ENCODE measurements at regions of chr10 and their contacts with region 1.

Region 1: GRCh38 chr10:119750391-119751230 is 24.8 kb downstream of the INPP5F start:
- DNase-seq: peak; percentile 82
- H3K4me3 Mint-ChIP-seq: no peak overlapping the region
- H3K27ac Mint-ChIP-seq: no peak overlapping the region
- H3K4me1 Mint-ChIP-seq: peaks cover 11% of the 10 kb centered on the region
- H3K27me3 Mint-ChIP-seq: no peaks in the 10 kb centered on the region

Region 2: DNA sequence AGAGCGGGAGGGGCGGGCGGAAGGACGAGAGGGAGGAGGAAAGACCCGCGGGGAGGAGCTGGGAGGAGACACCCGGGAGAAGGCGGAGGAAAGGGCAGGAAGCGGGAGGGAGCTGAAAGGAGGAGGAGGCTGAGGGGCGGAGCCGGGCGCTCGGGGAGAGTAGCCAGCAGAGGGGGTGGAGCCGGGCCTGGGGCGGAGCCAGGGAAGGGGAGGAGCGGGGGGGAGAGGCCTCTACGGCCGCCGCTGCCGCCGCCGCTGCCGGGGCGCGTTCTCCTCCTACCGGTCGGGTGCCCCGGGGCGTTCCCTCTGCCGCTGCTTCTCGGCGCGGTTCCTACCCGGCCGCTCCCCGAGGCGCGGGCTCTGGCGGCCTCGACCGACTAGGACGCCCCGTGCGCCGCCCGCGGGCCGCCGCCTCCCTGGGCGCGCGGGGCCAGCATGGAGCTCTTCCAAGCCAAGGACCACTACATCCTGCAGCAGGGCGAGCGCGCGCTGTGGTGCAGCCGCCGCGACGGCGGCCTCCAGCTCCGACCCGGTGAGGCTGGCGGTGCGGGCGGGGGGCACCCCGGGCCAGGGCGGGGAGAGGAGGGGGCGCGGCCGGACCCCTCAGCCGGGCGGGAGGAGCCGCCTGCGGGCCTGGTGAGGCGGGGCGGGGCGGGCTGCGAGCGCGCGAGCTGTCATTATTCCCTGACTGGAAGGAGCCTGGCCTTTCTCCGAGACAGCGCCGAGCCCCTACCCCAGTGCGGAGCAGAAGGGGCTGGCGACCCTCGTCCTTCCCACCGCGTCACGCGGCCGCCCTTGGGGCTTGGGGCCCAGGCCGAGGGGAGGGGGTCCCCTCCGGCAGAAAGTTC is 24.6 kb before region 1 on chr10 and contains the start of gene INPP5F:
- CTCF ChIA-PET with region 1: interaction called, 16 read pairs
- intact Hi-C with region 1: no loop called
- DNase-seq: peak; percentile 100
- H3K4me3 Mint-ChIP-seq: peak within 1 kb of the TSS; percentile 88
- H3K27ac Mint-ChIP-seq: peak within 1 kb of the TSS; percentile 78
- H3K4me1 Mint-ChIP-seq: peaks cover 41% of the 10 kb centered on the region
- H3K27me3 Mint-ChIP-seq: no peaks in the 10 kb centered on the region
- total RNA-seq, gene INPP5F: 10.5 to 10.9 TPM

Region 3: DNA sequence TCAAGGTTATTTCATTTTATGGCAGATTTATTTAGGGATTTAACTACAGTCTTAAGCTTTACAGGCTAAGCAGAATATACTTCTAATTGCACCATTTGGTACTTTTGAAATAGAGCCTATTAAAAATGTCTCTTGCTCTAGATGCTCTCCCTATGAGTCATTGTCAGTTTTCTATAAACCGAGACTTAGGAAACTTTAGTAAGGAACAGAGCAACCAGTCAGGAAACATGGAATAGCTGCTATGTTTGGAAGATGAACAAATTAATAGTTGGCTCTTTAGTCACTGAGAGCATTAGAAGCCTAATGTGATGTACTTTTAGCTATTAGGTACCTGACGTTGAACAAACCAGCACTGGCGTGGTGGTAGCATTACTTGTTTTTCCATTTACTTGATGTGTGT is 10.5 kb after region 1 on chr10:
- CTCF ChIA-PET with region 1: interaction called, 16 read pairs
- intact Hi-C with region 1: no loop called
- DNase-seq: no peak
- H3K4me3 Mint-ChIP-seq: no peak overlapping the region
- H3K27ac Mint-ChIP-seq: no peak overlapping the region
- H3K4me1 Mint-ChIP-seq: peaks cover 3% of the 10 kb centered on the region
- H3K27me3 Mint-ChIP-seq: no peaks in the 10 kb centered on the region

Region 4: GRCh38 chr10:119872860-119873681 is 122.5 kb after region 1 on chr10:
- CTCF ChIA-PET with region 1: interaction called, 10 read pairs
- intact Hi-C with region 1: no loop called
- DNase-seq: peak; percentile 84
- H3K4me3 Mint-ChIP-seq: peak overlapping the region; percentile 83
- H3K27ac Mint-ChIP-seq: peak overlapping the region; percentile 84
- H3K4me1 Mint-ChIP-seq: peaks cover 38% of the 10 kb centered on the region
- H3K27me3 Mint-ChIP-seq: no peaks in the 10 kb centered on the region

Region 5: GRCh38 chr10:120336911-120337540 is 586.4 kb after region 1 on chr10:
- CTCF ChIA-PET with region 1: interaction called, 9 read pairs
- intact Hi-C with region 1: loop called (anchors 1 kb)
- DNase-seq: peak; percentile 80
- H3K4me3 Mint-ChIP-seq: no peak overlapping the region
- H3K27ac Mint-ChIP-seq: no peak overlapping the region
- H3K4me1 Mint-ChIP-seq: no peaks in the 10 kb centered on the region
- H3K27me3 Mint-ChIP-seq: peaks cover 12% of the 10 kb centered on the region

Measured in activated naive CD4-positive, alpha-beta T cell treated with anti-CD3 and anti-CD28 coated beads for 36 hours (primary cell).